K562 (cell line): ENCODE measurements at regions of chr13 and their contacts with region 1.

Region 1: GRCh38 chr13:76473552-76474134 is 412.6 kb downstream of the KCTD12 start:
- DNase-seq: peak; percentile 48 to 72 (median 64)
- ATAC-seq: peak; percentile 98
- H3K4me3 ChIP-seq: no peak overlapping the region
- H3K27ac ChIP-seq: no peak overlapping the region
- H3K4me1 ChIP-seq: no peaks in the 10 kb centered on the region
- H3K27me3 ChIP-seq: no peaks in the 10 kb centered on the region
- CTCF ChIP-seq: peak; percentile 62 to 89 (median 76)
- EP300 ChIP-seq: no peak
- POLR2A ChIP-seq: no peak
- RAD21 ChIP-seq: peak; percentile 75 to 80

Region 2: DNA sequence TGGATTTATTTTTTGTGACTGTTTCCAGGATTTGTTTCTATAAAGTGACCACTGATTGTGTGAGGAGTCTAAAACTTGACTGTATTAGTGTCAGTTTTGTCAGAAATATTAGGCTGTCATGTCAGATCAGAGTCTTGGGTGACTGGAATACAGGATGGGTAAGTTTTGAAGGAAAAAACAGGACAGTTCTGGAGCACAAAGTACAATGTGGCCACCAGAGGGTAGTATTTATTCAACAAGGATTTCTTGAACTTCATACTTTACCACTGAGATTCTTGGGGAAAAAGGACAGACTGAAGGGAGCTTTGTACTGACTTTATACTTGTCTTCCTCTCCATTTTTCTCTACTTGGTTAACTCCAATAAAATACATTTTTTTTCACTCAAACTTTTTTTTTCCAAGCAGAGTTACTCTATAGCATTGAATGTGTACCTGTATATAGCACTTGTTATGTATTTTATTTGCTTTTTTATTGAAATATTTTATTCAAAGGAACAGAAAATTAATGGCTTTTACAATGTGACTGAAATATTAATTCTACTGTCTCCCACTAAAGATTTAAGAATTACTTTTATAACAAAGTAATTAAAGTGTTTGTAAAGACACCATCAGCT is 786.4 kb before region 1 on chr13:
- CTCF ChIA-PET with region 1: no interaction called
- POLR2A ChIA-PET with region 1: no interaction called
- in situ Hi-C with region 1: loop called (anchors 10 kb)
- intact Hi-C with region 1: no loop called
- DNase-seq: peak; percentile 6 to 11 (median 9)
- ATAC-seq: peak; percentile 64; the same call in 2 of the 3 replicates
- H3K4me3 ChIP-seq: no peak overlapping the region
- H3K27ac ChIP-seq: no peak overlapping the region
- H3K4me1 ChIP-seq: no peaks in the 10 kb centered on the region
- H3K27me3 ChIP-seq: no peaks in the 10 kb centered on the region
- CTCF ChIP-seq: peak in 2 of 3 experiments; percentile 33 to 35; a peak in 1 of 6 replicates
- EP300 ChIP-seq: no peak
- POLR2A ChIP-seq: no peak
- RAD21 ChIP-seq: 0 out of 4 replicates have a peak, but pooled peaks of 1 of the 2 experiments have one; percentile 7

Region 3: GRCh38 chr13:75694722-75695121 is 778.9 kb before region 1 on chr13:
- CTCF ChIA-PET with region 1: interaction called, 9 read pairs
- POLR2A ChIA-PET with region 1: no interaction called
- in situ Hi-C with region 1: loop called (anchors 10 kb)
- intact Hi-C with region 1: loop called (anchors 1 kb)
- DNase-seq: no peak
- ATAC-seq: no peak
- H3K4me3 ChIP-seq: no peak overlapping the region
- H3K27ac ChIP-seq: no peak overlapping the region
- H3K4me1 ChIP-seq: no peaks in the 10 kb centered on the region
- H3K27me3 ChIP-seq: no peaks in the 10 kb centered on the region
- CTCF ChIP-seq: no peak
- EP300 ChIP-seq: no peak
- POLR2A ChIP-seq: no peak
- RAD21 ChIP-seq: no peak

Region 4: DNA sequence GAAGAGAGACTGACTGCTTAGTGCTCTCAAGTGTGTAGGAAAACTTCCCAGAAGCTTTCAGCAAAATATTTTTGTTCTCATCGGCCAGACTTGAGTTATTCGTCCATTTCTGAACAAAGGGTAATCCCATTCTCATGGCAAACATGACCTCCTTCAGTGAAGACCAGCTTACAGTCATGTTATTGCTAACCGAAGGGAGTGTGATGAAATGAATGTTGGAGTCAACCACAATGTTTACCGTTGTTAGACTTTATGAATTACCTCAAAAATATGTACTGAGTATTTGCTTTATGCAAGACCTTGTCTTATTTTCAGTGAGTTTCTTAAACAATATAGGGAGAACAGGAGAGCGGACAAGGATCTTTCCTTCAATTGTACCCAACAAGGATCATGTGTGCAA is 608.9 kb before region 1 on chr13:
- CTCF ChIA-PET with region 1: no interaction called
- POLR2A ChIA-PET with region 1: no interaction called
- in situ Hi-C with region 1: loop called (anchors 5 kb)
- intact Hi-C with region 1: no loop called
- DNase-seq: no peak
- ATAC-seq: no peak
- H3K4me3 ChIP-seq: no peak overlapping the region
- H3K27ac ChIP-seq: no peak overlapping the region
- H3K4me1 ChIP-seq: no peaks in the 10 kb centered on the region
- H3K27me3 ChIP-seq: no peaks in the 10 kb centered on the region
- CTCF ChIP-seq: no peak
- EP300 ChIP-seq: no peak
- POLR2A ChIP-seq: no peak
- RAD21 ChIP-seq: no peak

Region 5: GRCh38 chr13:75870397-75870903 is 603.2 kb before region 1 on chr13:
- CTCF ChIA-PET with region 1: interaction called, 7 read pairs
- POLR2A ChIA-PET with region 1: no interaction called
- in situ Hi-C with region 1: loop called (anchors 5 kb)
- intact Hi-C with region 1: loop called (anchors 1 kb)
- DNase-seq: peak; percentile 12 to 26 (median 24)
- ATAC-seq: no peak; the same call in 2 of the 3 replicates
- H3K4me3 ChIP-seq: no peak overlapping the region
- H3K27ac ChIP-seq: no peak overlapping the region
- H3K4me1 ChIP-seq: no peaks in the 10 kb centered on the region
- H3K27me3 ChIP-seq: no peaks in the 10 kb centered on the region
- CTCF ChIP-seq: peak; percentile 35 to 62 (median 60); a peak in 5 of 6 replicates
- EP300 ChIP-seq: no peak
- POLR2A ChIP-seq: no peak
- RAD21 ChIP-seq: peak; percentile 58 to 70

Region 6: DNA sequence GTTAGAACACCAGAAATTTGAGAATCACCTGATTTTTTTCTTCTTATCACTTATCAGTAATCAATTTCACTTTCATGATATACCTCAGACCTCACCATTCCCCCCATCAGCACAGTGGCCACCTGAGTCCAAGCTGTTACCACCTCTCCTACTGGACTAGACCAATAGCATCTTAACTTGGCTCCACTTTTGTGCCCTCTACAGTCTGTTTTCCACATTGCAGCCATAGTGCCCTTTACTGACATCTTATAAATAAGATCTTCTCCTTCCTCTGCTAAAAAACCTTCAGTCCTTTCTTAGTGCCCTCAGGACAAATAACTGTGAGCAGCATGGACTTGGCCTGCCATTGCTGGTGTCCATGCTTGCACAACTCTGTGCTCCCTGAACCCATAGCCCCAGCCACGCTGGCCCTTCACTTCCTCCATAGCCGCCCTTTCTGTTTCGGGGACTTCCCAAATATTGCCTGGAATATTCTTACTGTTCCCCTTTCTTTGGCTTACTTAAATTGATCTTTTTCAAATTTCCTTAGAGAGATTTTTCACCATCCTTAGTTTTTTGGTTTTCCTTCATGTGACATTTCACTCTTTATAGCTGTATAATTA is 456.7 kb before region 1 on chr13:
- CTCF ChIA-PET with region 1: no interaction called
- POLR2A ChIA-PET with region 1: no interaction called
- in situ Hi-C with region 1: no loop called
- intact Hi-C with region 1: loop called (anchors 5 kb)
- DNase-seq: peak; percentile 13 to 58 (median 16)
- ATAC-seq: peak; percentile 92
- H3K4me3 ChIP-seq: no peak overlapping the region
- H3K27ac ChIP-seq: no peak overlapping the region
- H3K4me1 ChIP-seq: no peaks in the 10 kb centered on the region; a peak in 1 of 5 replicates
- H3K27me3 ChIP-seq: no peaks in the 10 kb centered on the region
- CTCF ChIP-seq: peak; percentile 51 to 62 (median 61); a peak in 5 of 6 replicates
- EP300 ChIP-seq: no peak
- POLR2A ChIP-seq: no peak
- RAD21 ChIP-seq: peak; percentile 31 to 68; a peak in 2 of 4 replicates

Region 7: DNA sequence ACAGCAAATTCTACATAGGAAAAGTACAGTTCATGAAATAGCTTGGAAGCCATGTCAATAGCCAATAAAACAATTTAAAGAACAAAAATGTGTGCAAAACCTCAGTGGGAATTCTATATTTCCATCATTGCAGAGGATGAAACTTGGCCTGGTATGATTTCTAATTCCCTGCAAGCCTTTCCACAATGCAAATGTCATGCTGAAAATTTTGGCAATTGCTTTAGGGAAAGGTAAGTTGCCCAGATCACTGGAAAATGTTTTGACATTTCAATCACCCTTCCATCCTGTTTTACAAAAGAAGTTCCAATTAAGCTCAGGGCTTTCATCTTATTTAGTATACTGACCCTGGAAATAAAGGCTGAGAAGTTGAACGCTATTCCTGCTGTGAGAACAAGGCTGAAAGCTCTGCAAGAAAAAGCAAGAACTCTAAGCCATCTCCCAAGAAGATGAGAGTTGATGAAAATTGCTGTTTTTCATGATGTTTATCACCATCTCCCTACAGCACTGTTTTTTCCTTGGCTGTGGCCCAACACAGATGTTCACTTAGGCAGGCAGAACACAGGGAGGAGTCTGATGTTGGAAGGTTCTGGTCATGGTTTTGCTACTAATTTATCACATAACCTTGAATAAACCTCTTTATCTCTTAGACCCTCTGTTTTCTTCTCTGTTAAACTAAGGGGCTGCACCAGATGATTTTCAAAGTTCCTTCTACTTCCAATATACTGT is 148.8 kb after region 1 on chr13:
- CTCF ChIA-PET with region 1: no interaction called
- POLR2A ChIA-PET with region 1: no interaction called
- in situ Hi-C with region 1: no loop called
- intact Hi-C with region 1: no loop called
- DNase-seq: no peak
- ATAC-seq: no peak
- H3K4me3 ChIP-seq: no peak overlapping the region
- H3K27ac ChIP-seq: no peak overlapping the region
- H3K4me1 ChIP-seq: no peaks in the 10 kb centered on the region
- H3K27me3 ChIP-seq: no peaks in the 10 kb centered on the region
- CTCF ChIP-seq: no peak
- EP300 ChIP-seq: no peak
- POLR2A ChIP-seq: no peak
- RAD21 ChIP-seq: no peak